ENCODE measurements at regions of chr6 and their contacts with region 1.

Region 1: DNA sequence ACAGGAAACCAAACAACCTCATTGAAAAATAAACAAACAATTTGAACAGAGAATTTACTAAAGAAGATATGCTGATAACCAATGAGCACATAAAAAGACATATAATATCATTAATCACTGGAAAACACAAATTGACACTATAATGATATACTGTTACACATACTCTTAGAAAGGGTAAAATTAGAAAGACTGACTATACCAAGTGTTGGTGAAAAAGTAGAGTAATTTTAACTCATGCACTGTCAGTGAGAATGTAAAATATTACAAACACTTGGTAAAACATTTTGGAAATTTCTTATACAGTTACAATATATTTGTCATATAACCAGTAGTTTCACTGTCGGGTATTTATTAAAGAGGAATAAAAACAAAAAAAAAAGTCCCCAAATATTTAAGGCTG is 1139.2 kb upstream of the GJE1 start:
- DNase-seq: no peak
- H3K4me3 ChIP-seq: no peak overlapping the region
- H3K27ac ChIP-seq: no peak overlapping the region
- H3K4me1 ChIP-seq: peaks cover 0 to 9% (median 3%) of the 10 kb centered on the region in 4 donors
- H3K27me3 ChIP-seq: no peaks in the 10 kb centered on the region
- CTCF ChIP-seq: no peak

Region 2: DNA sequence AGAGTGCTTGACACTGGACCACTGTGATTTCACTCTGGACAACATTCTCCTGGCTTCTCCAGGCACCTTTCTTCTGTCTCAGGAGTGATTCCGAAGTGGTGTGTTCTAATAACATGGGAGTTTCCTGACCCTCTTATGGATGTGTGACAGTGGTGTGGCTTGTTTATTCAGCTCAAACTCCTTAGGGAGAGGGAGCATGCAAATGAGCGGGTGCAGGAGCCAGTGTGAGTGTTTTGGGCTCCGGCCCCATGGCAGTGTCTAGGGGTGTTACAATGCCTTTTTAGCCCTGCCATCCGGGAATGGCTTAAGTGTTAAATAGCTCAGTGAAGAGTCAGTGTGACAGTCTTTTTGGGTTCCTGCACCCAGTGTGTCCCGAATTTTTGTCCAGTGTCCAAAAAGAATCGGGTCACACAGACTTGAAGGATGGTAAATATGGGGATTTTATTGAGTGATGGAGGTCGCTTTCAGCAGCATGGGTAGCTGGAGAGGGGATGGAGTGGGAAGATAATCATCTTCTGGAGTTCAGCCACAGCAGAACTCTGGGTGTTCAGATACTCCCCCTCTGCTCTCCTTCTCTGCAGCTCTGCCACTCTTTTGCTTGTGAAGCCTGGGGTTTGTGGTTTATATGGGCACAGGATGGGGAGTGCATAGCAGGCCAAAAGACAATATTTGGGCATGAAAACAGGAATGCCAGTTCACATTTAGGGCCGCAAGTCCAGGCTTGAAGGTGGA is 690.1 kb before region 1 on chr6:
- intact Hi-C with region 1: no loop called
- DNase-seq: no peak
- H3K4me3 ChIP-seq: no peak overlapping the region
- H3K27ac ChIP-seq: no peak overlapping the region
- H3K4me1 ChIP-seq: no peaks in the 10 kb centered on the region
- H3K27me3 ChIP-seq: no peaks in the 10 kb centered on the region
- CTCF ChIP-seq: no peak

Region 3: GRCh38 chr6:140660295-140660694 is 333.2 kb before region 1 on chr6:
- intact Hi-C with region 1: no loop called
- DNase-seq: no peak
- H3K4me3 ChIP-seq: no peak overlapping the region
- H3K27ac ChIP-seq: no peak overlapping the region
- H3K4me1 ChIP-seq: no peaks in the 10 kb centered on the region
- H3K27me3 ChIP-seq: no peaks in the 10 kb centered on the region
- CTCF ChIP-seq: no peak

Region 4: DNA sequence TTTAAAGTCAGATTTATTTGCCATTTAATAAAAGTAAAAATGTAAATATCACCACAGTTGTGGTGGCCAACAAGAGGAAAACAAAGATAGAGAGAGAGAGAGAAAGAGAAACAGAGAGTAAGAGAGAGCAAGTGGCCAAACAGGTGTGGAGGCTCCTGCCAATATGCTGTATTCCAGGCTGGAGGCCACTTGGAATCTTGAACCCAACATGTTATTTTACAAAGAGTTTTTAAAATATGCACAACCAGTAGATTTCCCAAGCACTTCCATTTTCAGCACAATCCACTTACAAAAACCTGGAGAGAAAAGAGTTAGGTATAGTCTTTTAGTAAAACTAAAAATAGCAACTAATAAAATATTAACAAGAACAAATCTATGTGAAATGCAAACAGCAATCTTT is 295.9 kb before region 1 on chr6:
- intact Hi-C with region 1: no loop called
- DNase-seq: no peak
- H3K4me3 ChIP-seq: no peak overlapping the region
- H3K27ac ChIP-seq: no peak overlapping the region
- H3K4me1 ChIP-seq: no peaks in the 10 kb centered on the region
- H3K27me3 ChIP-seq: no peaks in the 10 kb centered on the region
- CTCF ChIP-seq: no peak

Region 5: DNA sequence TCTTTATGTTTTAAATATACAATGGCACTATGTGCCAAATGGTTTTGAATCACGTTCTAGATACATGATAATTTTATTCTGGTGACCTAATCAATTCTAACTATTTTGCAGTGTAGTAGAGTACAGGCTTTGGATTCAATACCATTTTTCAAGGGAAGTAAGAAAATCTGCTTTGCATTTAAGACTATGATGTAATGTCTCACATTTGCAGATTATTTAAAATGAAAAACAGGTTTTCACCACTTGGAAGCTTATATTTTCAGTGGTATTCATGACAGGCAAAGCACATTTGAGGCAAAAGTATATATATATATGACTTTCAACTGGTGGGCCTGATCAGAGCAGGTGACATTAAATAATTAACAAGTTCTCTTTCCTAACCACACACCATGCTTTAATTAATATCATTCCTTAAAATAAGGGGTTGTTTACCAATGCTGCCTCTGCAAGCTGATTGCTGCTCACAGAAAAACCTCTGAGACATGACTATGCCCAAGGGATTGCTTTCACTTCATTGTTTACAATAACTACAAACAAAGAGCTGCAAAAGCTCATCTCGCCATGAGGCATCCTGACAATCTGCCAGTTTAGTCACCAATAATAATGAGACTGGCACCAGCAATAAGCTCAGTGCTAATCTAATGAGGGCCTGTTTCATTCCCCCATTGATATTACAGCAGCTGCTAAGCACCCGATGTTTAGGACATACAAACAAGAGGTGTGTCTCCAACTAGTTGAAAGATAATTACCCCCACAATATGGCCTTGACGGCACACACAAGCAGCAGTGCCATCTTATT is 36.7 kb before region 1 on chr6:
- intact Hi-C with region 1: no loop called
- DNase-seq: no peak
- H3K4me3 ChIP-seq: no peak overlapping the region
- H3K27ac ChIP-seq: no peak overlapping the region
- H3K4me1 ChIP-seq: peaks cover 0 to 6% (median 0%) of the 10 kb centered on the region in 4 donors
- H3K27me3 ChIP-seq: no peaks in the 10 kb centered on the region
- CTCF ChIP-seq: no peak

Region 6: GRCh38 chr6:141029908-141030307 is 36.4 kb after region 1 on chr6:
- intact Hi-C with region 1: loop called (anchors 2 kb)
- DNase-seq: no peak
- H3K4me3 ChIP-seq: no peak overlapping the region
- H3K27ac ChIP-seq: no peak overlapping the region
- H3K4me1 ChIP-seq: peaks cover 0 to 16% (median 2%) of the 10 kb centered on the region in 4 donors
- H3K27me3 ChIP-seq: no peaks in the 10 kb centered on the region
- CTCF ChIP-seq: no peak

Measured in tibial artery (tissue), 4 donors.